Activated naive CD4-positive, alpha-beta T cell treated with anti-CD3 and anti-CD28 coated beads for 36 hours (primary cell): ENCODE measurements at regions of chr5 and their contacts with region 1.

Region 1: GRCh38 chr5:119411935-119412602 is 40.2 kb upstream of the HSD17B4 start:
- DNase-seq: peak; percentile 77
- H3K4me3 Mint-ChIP-seq: peak overlapping the region; percentile 72
- H3K27ac Mint-ChIP-seq: peak overlapping the region; percentile 77
- H3K4me1 Mint-ChIP-seq: peaks cover 36% of the 10 kb centered on the region
- H3K27me3 Mint-ChIP-seq: no peaks in the 10 kb centered on the region

Region 2: DNA sequence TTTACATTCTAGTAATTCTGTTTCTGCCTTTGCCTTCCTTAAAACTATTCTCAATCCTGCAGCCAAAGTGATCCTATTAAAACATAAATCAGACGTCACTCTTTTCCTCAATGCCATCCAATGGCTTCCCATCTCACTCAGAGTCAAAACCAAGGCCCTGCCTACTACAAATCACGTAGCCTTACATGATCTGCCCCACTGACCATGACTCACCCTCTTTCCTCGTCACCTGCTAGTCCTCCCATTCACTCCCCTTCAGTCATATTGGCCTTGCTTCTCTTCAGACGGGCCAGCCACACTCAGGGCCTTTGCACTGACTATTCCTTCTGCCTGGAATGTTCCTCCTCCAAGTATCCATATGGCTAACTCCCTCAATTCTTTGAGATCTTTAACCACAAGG is 380.2 kb before region 1 on chr5:
- CTCF ChIA-PET with region 1: interaction called, 4 read pairs
- intact Hi-C with region 1: loop called (anchors 2 kb)
- DNase-seq: peak; percentile 42
- H3K4me3 Mint-ChIP-seq: no peak overlapping the region
- H3K27ac Mint-ChIP-seq: peak overlapping the region; percentile 89
- H3K4me1 Mint-ChIP-seq: peaks cover 46% of the 10 kb centered on the region
- H3K27me3 Mint-ChIP-seq: no peaks in the 10 kb centered on the region

Region 3: GRCh38 chr5:119274767-119275130 is 137.3 kb before region 1 on chr5:
- CTCF ChIA-PET with region 1: interaction called, 18 read pairs
- intact Hi-C with region 1: loop called (anchors 1 kb)
- DNase-seq: peak; percentile 50
- H3K4me3 Mint-ChIP-seq: peak overlapping the region; percentile 72
- H3K27ac Mint-ChIP-seq: peak overlapping the region; percentile 97
- H3K4me1 Mint-ChIP-seq: peaks cover 88% of the 10 kb centered on the region
- H3K27me3 Mint-ChIP-seq: no peaks in the 10 kb centered on the region

Region 4: DNA sequence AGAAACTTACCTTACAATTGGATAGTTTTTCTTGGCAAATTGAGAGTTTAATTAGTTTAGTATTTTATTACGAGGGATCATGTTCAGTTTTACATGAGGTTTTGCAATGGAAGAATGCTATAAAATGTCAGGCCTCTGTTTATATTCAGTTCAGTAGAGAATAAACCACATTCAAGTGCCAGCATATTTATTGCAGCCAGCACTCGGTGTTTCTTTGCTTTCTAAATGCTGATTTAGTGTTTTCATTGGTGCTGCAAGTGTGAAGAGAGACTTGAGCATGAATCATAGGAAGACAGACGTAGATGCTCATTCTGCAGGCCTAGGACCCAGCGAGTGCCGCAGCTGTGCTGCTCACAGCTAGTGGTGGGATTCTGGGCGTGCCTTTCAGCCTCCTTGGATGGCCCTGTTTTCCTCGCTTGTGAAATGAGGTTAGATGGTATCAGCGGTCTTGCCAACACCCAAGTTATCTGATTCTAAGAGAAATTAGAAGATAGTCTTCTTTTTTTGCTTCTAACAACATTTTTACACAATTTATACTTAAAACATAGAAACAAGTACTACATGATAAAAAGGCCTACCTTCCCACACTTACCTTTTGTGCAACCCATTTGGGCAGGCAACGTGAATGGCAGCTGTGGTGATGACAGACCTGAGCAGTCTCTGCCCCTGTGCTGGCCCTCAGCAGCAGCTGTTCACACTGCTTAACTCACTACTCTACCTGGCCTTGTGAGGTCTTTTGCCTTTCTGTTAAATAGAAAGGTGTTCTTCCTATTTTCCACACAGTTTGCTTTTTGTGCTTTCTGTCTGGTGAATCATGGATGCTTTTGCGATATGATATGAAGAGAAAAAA is 83.1 kb before region 1 on chr5:
- CTCF ChIA-PET with region 1: interaction called, 54 read pairs
- intact Hi-C with region 1: no loop called
- DNase-seq: peak; percentile 76
- H3K4me3 Mint-ChIP-seq: peak overlapping the region; percentile 57
- H3K27ac Mint-ChIP-seq: peak overlapping the region; percentile 94
- H3K4me1 Mint-ChIP-seq: peaks cover 93% of the 10 kb centered on the region
- H3K27me3 Mint-ChIP-seq: no peaks in the 10 kb centered on the region

Region 5: GRCh38 chr5:119355685-119356611 is 56.1 kb before region 1 on chr5 and contains the start of gene TNFAIP8:
- CTCF ChIA-PET with region 1: interaction called, 12 read pairs
- intact Hi-C with region 1: no loop called
- DNase-seq: peak; percentile 91
- H3K4me3 Mint-ChIP-seq: peak within 1 kb of the TSS; percentile 98
- H3K27ac Mint-ChIP-seq: peak within 1 kb of the TSS; percentile 98
- H3K4me1 Mint-ChIP-seq: peaks cover 67% of the 10 kb centered on the region
- H3K27me3 Mint-ChIP-seq: no peaks in the 10 kb centered on the region
- total RNA-seq, gene TNFAIP8: 141 to 142 TPM

Region 6: DNA sequence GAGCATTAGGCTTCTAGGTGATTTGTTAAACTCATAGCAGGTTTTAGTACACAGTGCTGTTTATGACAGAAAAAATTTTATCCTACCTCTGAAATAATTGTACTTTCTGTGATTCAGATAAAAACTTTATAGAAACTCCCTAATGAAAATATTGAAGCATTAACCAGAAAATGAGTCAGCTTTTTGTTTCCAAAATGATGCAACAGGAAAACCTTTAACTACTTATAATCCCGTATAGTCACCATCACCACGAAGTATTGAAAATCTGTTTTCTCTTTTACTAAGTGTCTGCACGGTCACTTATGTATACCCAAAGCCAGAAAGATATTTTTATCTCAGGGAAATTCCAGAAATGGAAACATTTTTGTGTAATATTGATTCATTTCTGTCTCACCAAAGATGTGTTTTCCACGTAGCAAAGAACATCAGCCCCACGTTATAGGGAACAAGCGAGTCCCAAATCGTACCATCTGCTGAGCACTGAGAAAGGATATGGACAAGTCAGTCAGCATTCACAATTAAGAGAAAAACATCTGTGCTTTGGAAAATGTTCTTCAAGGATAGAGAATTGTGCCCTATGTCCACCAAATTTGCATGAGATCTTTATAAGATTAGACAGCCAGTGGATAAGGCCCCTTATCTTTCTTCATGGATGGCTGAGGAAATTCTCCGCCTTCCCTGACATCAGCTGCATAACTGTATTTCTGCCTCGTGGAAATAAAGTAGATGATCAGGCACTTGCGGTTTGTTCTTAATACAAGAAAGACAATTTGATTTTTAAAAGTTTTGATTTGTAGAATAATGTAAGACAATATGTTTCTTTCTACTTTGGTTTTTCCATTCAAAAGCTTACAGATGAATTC is 14.3 kb before region 1 on chr5:
- CTCF ChIA-PET with region 1: interaction called, 62 read pairs
- intact Hi-C with region 1: loop called (anchors 1 kb)
- DNase-seq: peak; percentile 55
- H3K4me3 Mint-ChIP-seq: peak overlapping the region; percentile 23
- H3K27ac Mint-ChIP-seq: peak overlapping the region; percentile 89
- H3K4me1 Mint-ChIP-seq: peaks cover 89% of the 10 kb centered on the region
- H3K27me3 Mint-ChIP-seq: no peaks in the 10 kb centered on the region

Region 7: GRCh38 chr5:119743927-119744326 is 331.9 kb after region 1 on chr5:
- CTCF ChIA-PET with region 1: no interaction called
- intact Hi-C with region 1: loop called (anchors 2 kb)
- DNase-seq: peak; percentile 22
- H3K4me3 Mint-ChIP-seq: no peak overlapping the region
- H3K27ac Mint-ChIP-seq: no peak overlapping the region
- H3K4me1 Mint-ChIP-seq: no peaks in the 10 kb centered on the region
- H3K27me3 Mint-ChIP-seq: peaks cover 3% of the 10 kb centered on the region

Region 8: GRCh38 chr5:120017513-120017912 is 605.4 kb after region 1 on chr5:
- CTCF ChIA-PET with region 1: no interaction called
- intact Hi-C with region 1: no loop called
- DNase-seq: no peak
- H3K4me3 Mint-ChIP-seq: no peak overlapping the region
- H3K27ac Mint-ChIP-seq: no peak overlapping the region
- H3K4me1 Mint-ChIP-seq: no peaks in the 10 kb centered on the region
- H3K27me3 Mint-ChIP-seq: no peaks in the 10 kb centered on the region